Psoas muscle (tissue), 8 donors: ENCODE measurements at regions of chr11 and their contacts with region 1.

Region 1: DNA sequence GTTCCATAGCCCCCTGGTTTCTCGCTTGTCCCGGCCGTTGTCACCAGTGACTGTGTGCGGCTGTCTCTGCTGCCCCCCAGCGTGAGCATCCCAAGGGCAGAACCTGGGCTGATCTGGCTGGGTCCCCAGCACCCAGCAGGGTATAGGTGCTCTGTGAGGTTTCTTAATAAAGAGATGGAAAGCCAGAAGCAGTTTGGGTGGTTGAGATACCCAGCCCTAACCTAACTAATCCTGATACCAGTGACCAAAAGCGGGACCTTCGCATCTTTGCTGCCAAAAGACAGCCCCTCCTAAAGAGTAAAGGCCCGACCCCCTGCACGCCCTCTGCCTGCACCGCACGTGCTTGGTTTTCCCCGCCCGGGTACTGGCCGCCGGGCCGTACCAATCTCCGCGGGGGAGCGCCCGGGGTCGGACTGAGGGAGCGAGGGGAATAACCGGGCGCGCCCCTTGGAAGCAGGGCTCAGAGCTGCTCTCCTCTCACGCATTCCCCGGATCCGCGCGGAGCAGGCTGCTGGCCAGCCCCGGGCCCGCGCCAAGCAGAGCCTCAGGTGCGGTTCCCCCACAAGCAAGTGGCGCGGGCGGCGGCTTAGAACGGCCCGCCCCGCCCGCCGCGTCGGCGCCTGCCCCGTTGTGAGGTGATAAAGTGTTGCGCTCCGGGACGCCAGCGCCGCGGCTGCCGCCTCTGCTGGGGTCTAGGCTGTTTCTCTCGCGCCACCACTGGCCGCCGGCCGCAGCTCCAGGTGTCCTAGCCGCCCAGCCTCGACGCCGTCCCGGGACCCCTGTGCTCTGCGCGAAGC is at the start of gene DGAT2:
- DNase-seq: peak; percentile 80 to 88
- ATAC-seq: peak; percentile 85 to 97 (median 88)
- H3K4me3 ChIP-seq: peak within 1 kb of the TSS; percentile 68
- H3K27ac ChIP-seq: no peak within 1 kb of the TSS
- H3K4me1 ChIP-seq: peaks cover 6% of the 10 kb centered on the region
- H3K27me3 ChIP-seq: peaks cover 0 to 26% (median 0%) of the 10 kb centered on the region in 3 donors
- CTCF ChIP-seq: no peak
- total RNA-seq, gene DGAT2: 1.1 to 6.7 (median 3.4) TPM

Region 2: GRCh38 chr11:75721855-75722668 is 46.2 kb before region 1 on chr11:
- intact Hi-C with region 1: loop called (anchors 5 kb)
- DNase-seq: no peak
- ATAC-seq: no peak
- H3K4me3 ChIP-seq: no peak overlapping the region
- H3K27ac ChIP-seq: no peak overlapping the region
- H3K4me1 ChIP-seq: no peaks in the 10 kb centered on the region
- H3K27me3 ChIP-seq: no peaks in the 10 kb centered on the region
- CTCF ChIP-seq: no peak